Right cardiac atrium (tissue), 5 donors: ENCODE measurements at regions of chr14 and their contacts with region 1.

Region 1: DNA sequence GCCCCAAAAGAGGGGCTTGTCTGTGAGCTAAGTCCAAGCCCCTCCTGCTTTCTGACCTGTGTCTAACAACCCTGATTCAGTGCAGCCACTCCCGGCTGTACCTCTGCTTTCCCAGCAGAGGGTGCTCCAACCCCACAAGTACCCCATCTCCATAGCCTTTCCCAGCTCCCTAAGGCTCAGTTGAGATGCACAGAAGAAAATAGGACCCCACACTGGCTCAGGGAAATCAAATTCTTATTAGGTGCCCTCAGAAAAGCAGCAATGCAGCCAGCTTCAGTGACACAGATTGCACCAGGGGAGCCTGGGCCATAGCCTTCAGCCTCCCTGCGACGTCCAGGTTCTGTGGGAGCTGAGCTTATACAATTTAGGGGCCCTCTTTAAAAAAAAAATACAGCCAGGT is 49.9 kb downstream of the LRRC74A start:
- DNase-seq: peak; percentile 39 to 77 (median 70)
- ATAC-seq: peak; percentile 83 to 85
- H3K4me3 ChIP-seq: no peak overlapping the region
- H3K27ac ChIP-seq: no peak overlapping the region
- H3K4me1 ChIP-seq: no peaks in the 10 kb centered on the region
- H3K27me3 ChIP-seq: no peaks in the 10 kb centered on the region

Region 2: DNA sequence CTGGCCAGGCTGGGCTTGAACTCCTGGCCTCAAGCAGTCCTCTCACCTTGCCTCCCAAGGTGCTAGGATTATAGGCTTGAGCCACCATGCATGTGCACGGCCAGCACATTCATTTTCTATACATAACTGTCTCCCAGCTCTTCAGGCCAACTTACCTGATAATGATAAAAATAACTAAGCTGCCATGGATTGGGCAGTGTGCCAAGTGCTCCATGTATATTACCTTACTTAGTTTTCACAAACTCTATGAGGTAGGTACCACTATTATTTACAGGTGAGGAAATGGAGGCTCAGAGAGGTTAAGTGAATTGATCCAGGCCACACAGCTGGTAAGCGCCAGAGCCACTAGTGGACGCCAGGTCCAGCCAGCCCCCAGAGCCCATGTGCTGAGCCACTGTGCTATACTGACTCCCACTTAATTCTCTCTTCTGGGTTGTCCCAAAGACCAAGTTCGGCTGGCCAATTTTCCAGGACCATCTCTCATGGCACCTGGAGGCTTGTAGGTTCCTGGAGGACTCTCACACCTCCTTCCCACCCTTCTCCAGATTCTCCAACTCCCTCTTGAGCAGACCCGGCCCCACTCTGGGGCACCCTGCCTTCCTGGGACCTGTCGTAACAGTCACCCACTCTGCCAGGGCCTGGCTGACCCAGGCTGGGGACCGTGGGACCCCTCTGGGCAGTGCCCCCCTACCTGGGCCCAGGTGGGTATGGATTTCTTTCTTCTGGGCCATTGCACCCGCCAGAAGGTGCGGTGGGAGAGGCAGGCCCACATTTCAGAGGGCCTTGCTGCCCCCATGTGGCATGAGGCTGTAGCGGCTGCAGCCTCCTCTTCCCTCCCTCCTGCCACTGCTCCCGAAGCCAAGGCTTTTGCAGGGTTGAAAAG is 191.8 kb after region 1 on chr14:
- intact Hi-C with region 1: loop called (anchors 1 to 5 kb)
- DNase-seq: peak; percentile 74 to 87 (median 87)
- ATAC-seq: peak; percentile 71 to 78
- H3K4me3 ChIP-seq: no peak overlapping the region
- H3K27ac ChIP-seq: peak overlapping the region; percentile 21
- H3K4me1 ChIP-seq: peaks cover 12% of the 10 kb centered on the region
- H3K27me3 ChIP-seq: no peaks in the 10 kb centered on the region

Region 3: DNA sequence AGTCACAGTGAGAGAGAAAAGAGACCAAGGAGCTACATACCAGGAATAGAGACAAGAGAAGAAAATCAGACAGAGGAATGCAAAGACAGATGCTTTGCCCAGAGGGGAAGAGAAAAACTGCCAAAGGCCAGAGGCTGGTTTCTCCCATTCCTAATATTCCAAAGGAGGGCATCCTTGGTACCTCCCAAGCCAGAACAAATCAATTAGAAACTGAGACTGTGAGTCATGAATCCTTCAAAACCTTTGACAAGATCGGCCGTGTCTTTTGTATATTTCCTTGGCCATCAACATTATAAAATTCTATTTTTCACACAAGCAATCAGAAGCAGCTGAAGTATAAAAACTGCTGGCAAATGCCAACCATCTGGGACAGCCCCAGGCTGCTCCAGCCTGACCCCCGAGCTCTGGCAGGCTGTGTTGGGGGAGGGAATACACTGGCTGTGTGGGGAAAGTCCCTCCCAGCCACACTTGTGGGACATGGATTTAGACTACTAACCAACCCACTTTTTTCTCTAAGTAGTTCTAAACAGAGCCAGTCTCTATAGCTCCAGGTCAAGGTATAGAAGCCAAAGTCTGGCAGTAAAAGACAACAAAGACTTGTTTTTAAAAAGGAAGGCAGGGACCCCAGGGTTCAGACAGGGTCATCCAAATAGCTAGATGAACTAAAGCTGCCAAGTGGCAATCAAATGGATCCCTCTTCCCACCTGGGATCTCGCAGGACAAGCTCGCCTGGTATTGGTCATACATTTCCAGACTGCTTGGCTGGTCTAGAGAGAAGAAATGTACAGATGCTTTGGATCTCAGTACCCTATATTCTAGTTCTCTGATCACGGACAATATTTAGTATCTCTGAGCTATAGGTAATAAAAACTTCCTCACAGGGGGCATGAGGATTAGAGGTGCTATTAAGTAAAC is 431.0 kb after region 1 on chr14:
- intact Hi-C with region 1: loop called in 2 of 4 experiments (anchors 5 to 10 kb)
- DNase-seq: no peak
- ATAC-seq: peak in 1 of 2 donors; percentile 52
- H3K4me3 ChIP-seq: no peak overlapping the region
- H3K27ac ChIP-seq: no peak overlapping the region
- H3K4me1 ChIP-seq: no peaks in the 10 kb centered on the region
- H3K27me3 ChIP-seq: no peaks in the 10 kb centered on the region

Region 4: DNA sequence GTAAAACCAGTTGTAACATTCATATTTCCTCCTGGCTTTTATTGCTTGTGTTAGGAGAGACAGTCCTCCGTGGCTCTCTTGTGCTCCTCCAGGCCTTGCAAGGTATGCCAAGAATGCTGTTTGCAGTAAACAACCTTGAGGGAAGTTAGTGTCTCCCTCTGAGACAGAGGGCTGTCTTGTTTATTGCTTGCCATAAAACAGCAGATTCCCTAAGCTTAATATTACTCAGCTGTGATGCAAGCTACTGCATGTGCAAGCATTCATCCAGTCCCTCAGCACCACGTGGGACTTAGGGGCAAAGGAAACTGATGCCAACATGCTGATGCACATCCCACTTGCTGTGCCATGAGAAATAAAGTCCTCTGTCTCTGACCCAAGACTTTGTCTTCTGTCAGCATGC is 438.0 kb after region 1 on chr14:
- intact Hi-C with region 1: loop called in 3 of 4 experiments (anchors 5 to 10 kb)
- DNase-seq: no peak
- ATAC-seq: no peak
- H3K4me3 ChIP-seq: no peak overlapping the region
- H3K27ac ChIP-seq: no peak overlapping the region
- H3K4me1 ChIP-seq: peaks cover 8% of the 10 kb centered on the region
- H3K27me3 ChIP-seq: no peaks in the 10 kb centered on the region